ENCODE measurements at regions of chr9 and their contacts with region 1.

Region 1: DNA sequence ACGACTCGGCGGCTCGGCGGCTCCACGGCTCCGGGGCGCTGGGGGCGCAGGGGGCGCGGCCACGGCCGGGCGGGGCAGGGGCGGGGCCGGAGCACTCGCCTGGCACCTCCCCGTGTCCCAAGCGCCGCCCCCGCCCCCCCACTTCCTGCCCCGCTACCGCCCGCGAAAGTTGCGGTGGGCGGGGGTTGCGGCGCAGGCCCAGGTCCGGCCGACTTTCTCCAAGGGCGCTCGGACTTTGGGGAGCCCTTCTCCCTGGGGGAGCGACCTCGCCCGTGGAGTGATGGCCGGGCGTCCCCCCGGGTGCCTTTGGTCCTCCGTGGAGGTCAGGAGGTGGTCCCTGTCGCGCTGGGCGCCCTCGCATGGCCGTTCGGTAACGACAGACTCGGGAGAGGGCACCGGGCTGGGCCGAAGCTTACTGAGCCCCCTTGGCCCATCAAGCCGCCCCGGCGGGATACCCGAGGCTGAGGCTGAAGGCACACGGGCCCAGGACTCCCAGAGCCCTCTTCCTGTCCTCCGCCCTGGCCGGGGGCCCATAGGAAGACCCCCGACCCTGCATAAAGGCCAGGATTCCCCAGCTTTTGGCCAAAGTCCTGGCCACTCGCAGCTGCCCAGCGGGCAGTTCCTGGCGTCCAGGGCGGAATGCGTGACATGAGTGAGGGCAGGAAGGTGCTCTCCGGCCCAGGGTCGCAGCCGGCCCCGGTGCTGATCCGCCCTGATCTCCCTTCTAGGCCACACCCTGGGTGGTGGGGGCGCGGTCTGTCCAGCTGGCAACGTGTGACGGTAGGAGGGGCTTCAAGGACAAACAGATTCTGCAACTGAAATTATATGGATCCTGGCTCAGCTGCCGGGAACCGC is 883 bp upstream of the VAV2 start:
- DNase-seq: peak; percentile 64 to 84
- ATAC-seq: peak; percentile 53 to 82
- H3K4me3 ChIP-seq: peak overlapping the region; percentile 98
- H3K27ac ChIP-seq: peak overlapping the region; percentile 98 to 99
- H3K4me1 ChIP-seq: peaks cover 38% of the 10 kb centered on the region
- CTCF ChIP-seq: peak; percentile 64; the same call in 2 of the 3 replicates
- EP300 ChIP-seq: no peak
- POLR2A ChIP-seq: peak; percentile 62
- RAD21 ChIP-seq: peak in 1 of 2 experiments; percentile 46; a peak in 2 of 5 replicates

Region 2: GRCh38 chr9:133726401-133727276 is 266.4 kb before region 1 on chr9:
- CTCF ChIA-PET with region 1: interaction called, 22 read pairs
- POLR2A ChIA-PET with region 1: no interaction called
- DNase-seq: peak; percentile 69 to 78
- ATAC-seq: peak; percentile 80 to 86
- H3K4me3 ChIP-seq: no peak overlapping the region
- H3K27ac ChIP-seq: no peak overlapping the region
- H3K4me1 ChIP-seq: no peaks in the 10 kb centered on the region
- CTCF ChIP-seq: peak; percentile 48; the same call in 2 of the 3 replicates
- EP300 ChIP-seq: no peak
- POLR2A ChIP-seq: no peak
- RAD21 ChIP-seq: peak; percentile 69 to 81

Region 3: GRCh38 chr9:133782157-133783130 is 210.6 kb before region 1 on chr9:
- CTCF ChIA-PET with region 1: interaction called, 348 read pairs
- POLR2A ChIA-PET with region 1: interaction called, 9 read pairs
- DNase-seq: peak; percentile 66 to 75
- ATAC-seq: peak; percentile 54 to 86; a peak in 5 of 6 replicates
- H3K4me3 ChIP-seq: no peak overlapping the region
- H3K27ac ChIP-seq: no peak overlapping the region
- H3K4me1 ChIP-seq: no peaks in the 10 kb centered on the region
- CTCF ChIP-seq: peak; percentile 83
- EP300 ChIP-seq: no peak
- POLR2A ChIP-seq: no peak
- RAD21 ChIP-seq: peak; percentile 66 to 70

Region 4: DNA sequence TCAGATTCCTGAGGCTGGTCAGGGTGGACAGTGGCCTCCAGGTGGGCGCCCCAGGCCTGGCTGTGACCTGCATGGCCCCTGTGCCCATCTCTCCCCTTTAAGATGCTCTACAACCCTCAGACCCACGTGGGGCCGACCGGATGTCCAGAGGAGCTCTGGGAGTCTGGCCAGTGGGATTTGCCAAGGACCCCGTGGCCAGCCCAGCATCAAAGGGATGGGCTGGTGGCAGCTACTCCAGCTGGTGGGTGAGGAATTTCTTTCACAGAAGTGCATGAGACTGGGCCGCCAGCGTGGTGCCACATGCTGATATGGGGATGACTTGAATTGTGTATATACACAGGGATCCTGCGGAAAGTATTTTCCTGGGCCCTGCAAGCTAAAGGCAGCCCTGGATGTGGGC is 160.1 kb before region 1 on chr9:
- CTCF ChIA-PET with region 1: interaction called, 10 read pairs
- POLR2A ChIA-PET with region 1: no interaction called
- DNase-seq: no peak
- ATAC-seq: no peak
- H3K4me3 ChIP-seq: no peak overlapping the region
- H3K27ac ChIP-seq: no peak overlapping the region
- H3K4me1 ChIP-seq: no peaks in the 10 kb centered on the region
- CTCF ChIP-seq: no peak
- EP300 ChIP-seq: no peak
- POLR2A ChIP-seq: no peak
- RAD21 ChIP-seq: no peak

Region 5: DNA sequence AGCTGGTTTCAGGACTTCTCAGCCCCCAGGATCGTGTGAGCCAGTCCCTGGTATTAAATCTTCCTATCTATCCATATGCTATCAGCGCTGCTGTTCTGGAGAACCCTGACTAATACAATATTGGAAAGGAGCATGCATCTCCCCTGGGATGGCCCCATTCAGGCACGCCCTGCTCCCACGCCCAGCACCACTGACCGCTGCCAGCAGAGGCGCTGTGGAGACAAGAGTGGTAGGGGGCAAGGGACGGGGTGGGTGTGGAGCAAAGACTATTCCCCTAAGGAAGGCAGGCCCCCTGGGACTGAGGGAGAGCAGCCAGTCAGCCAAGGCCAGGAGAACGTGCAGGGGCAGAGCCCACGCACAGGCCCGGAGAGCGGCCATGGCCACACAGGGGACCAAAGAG is 116.9 kb before region 1 on chr9:
- CTCF ChIA-PET with region 1: interaction called, 39 read pairs
- POLR2A ChIA-PET with region 1: interaction called, 12 read pairs
- DNase-seq: no peak
- ATAC-seq: no peak
- H3K4me3 ChIP-seq: no peak overlapping the region
- H3K27ac ChIP-seq: peak overlapping the region; percentile 88 to 97
- H3K4me1 ChIP-seq: peaks cover 65% of the 10 kb centered on the region
- CTCF ChIP-seq: 0 out of 3 replicates have a peak, but pooled peaks have one; percentile 11
- EP300 ChIP-seq: no peak
- POLR2A ChIP-seq: no peak
- RAD21 ChIP-seq: no peak

Region 6: DNA sequence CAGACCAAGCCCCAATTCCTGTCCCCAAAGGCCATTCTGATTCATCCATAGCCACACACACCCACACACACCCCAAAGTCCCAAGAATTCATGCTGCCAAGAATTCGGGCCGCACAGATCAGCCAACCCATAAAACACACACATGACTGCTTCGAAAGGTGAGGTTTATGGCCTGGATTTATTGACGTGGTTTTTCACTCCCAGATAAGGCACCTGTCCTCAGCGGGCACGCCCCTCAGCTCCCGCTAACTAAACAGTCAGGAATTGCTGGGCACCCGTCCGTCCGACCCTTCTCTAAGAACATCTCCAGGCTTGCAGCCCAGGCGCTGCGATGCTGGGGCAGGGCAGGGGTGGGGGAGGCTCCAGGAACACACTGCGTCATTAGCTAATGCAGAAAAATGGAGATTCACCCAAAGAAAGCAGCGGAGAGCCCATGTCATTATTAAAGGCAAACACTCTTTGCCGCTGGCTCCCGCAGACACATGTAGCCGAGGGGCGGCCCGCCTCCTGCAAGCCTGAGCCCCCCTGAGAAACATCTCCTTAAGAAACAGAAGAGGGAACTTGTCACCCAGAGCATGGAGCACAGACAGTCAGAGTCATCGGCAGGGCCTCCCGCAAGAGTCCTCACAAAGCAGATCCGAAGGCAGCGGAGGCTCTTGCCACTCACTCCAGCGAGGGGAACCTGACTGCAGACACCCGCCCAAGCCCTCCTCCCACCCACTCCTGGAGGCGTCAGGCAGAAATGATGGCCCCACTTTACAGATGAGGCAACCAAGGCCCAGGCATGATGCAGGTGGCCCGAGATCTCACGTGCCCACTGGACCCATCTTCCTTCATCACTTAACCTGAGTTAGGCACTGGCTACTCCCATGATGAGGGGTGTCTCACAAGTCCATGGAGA is 20.7 kb before region 1 on chr9:
- CTCF ChIA-PET with region 1: interaction called, 48 read pairs
- POLR2A ChIA-PET with region 1: no interaction called
- DNase-seq: no peak
- ATAC-seq: no peak
- H3K4me3 ChIP-seq: no peak overlapping the region
- H3K27ac ChIP-seq: no peak overlapping the region
- H3K4me1 ChIP-seq: peaks cover 15% of the 10 kb centered on the region
- CTCF ChIP-seq: no peak
- EP300 ChIP-seq: no peak
- POLR2A ChIP-seq: no peak
- RAD21 ChIP-seq: no peak

Region 7: DNA sequence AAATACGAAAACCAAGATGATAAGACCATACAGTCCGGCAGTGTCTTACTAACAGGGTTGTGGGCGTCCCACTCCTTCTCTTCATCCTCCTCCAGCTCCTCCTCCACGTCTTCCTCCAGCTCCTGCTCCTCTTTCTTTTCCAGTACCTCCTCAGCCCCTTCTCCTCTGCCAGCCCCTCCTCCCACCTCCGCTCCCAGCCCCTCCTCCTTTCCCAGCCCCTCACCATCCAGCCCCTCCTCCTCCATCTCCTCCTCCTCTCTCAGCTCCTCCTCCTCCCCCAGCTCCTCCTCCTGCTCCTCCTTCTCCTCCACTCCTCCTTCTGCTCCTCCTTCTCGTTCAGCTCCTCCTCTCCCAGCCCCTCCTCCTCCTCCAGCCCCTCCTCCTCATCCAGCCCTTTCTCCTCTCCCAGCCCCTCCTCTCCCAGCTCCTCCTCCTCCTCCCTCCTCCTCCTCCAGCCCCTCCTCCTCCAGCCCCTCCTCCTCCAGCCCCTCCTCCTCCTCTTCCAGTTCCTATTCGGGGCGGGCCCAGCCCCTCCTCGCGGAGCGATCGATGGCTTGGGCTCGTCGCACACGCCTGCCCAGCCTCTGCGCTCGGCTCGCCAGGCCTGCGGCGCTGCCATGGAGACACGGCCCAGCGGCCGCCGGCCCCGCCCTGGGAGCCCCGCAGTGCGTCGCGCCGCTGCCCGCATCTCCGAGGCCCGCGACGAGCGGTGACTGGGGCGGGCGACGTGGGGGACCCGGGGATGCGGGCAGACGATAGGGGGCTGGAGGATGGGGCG is 32.0 kb after region 1 on chr9 and contains the start of gene BRD3OS:
- CTCF ChIA-PET with region 1: interaction called, 68 read pairs
- POLR2A ChIA-PET with region 1: interaction called, 5 read pairs
- DNase-seq: peak; percentile 93 to 99
- ATAC-seq: peak; percentile 90 to 91
- H3K4me3 ChIP-seq: peak within 1 kb of the TSS; percentile 92
- H3K27ac ChIP-seq: peak within 1 kb of the TSS; percentile 85 to 91
- H3K4me1 ChIP-seq: peaks cover 8% of the 10 kb centered on the region; the same call in 1 of the 3 replicates
- CTCF ChIP-seq: no peak
- EP300 ChIP-seq: no peak
- POLR2A ChIP-seq: no peak
- RAD21 ChIP-seq: no peak
- polyA plus RNA-seq, gene BRD3OS: 10.4 and 12.2 TPM in 2 replicates

Region 8: DNA sequence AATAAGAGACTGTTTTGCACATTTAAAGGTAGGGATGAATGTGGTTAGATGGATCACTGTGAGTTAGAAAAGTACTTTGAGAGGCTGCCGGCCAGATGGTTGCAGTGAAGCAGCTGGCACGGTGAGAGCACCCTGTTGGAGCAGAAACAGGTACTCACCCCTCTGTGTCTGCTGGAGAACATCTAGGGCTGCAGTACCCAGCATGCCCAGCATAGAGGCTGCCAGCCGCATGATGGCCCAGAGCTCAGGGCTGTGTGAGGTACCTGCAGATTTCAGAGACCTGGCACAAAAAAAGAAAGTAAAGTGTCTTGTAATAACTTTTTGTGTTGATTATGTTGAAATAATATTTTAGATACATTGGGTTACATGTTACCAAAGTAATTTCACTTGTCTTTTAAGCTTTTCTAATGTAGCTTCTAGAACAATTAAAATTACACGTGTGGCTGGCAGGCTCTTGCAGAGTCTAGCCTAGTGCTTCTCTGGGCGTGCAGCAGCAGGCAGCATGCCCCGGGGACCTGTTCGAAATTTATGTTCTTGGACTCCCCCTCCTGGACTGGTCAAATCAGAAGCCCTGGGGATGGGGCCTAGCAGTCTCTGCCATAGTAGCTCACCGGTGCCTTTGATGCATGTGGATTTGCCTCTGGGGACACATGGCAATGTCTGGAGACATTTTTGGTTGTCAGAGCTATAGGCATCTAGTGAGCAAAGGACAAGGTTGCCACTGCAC is 153.9 kb after region 1 on chr9:
- CTCF ChIA-PET with region 1: no interaction called
- POLR2A ChIA-PET with region 1: no interaction called
- DNase-seq: no peak
- ATAC-seq: peak in 1 of 2 experiments; percentile 74; a peak in 3 of 6 replicates
- H3K4me3 ChIP-seq: no peak overlapping the region
- H3K27ac ChIP-seq: no peak overlapping the region
- H3K4me1 ChIP-seq: no peaks in the 10 kb centered on the region
- CTCF ChIP-seq: no peak
- EP300 ChIP-seq: no peak
- POLR2A ChIP-seq: no peak
- RAD21 ChIP-seq: no peak

Region 9: GRCh38 chr9:134192951-134193731 is 200.1 kb after region 1 on chr9:
- CTCF ChIA-PET with region 1: no interaction called
- POLR2A ChIA-PET with region 1: no interaction called
- DNase-seq: no peak
- ATAC-seq: no peak
- H3K4me3 ChIP-seq: no peak overlapping the region
- H3K27ac ChIP-seq: no peak overlapping the region
- H3K4me1 ChIP-seq: no peaks in the 10 kb centered on the region
- CTCF ChIP-seq: no peak
- EP300 ChIP-seq: no peak
- POLR2A ChIP-seq: no peak
- RAD21 ChIP-seq: no peak